ENCODE measurements at regions of chr20 and their contacts with region 1.

Region 1: GRCh38 chr20:49179368-49180277 is 8.5 kb downstream of the STAU1 start:
- DNase-seq: no peak
- ATAC-seq: peak; percentile 89
- H3K4me3 ChIP-seq: peak overlapping the region; percentile 34
- H3K27ac ChIP-seq: peak overlapping the region; percentile 74
- H3K4me1 ChIP-seq: peaks cover 16% of the 10 kb centered on the region; the same call in 1 of the 2 replicates
- H3K27me3 ChIP-seq: no peaks in the 10 kb centered on the region
- CTCF ChIP-seq: no peak
- EP300 ChIP-seq: 0 out of 4 replicates have a peak, but pooled peaks of 1 of the 2 experiments have one; percentile 12
- POLR2A ChIP-seq: no peak
- RAD21 ChIP-seq: no peak

Region 2: DNA sequence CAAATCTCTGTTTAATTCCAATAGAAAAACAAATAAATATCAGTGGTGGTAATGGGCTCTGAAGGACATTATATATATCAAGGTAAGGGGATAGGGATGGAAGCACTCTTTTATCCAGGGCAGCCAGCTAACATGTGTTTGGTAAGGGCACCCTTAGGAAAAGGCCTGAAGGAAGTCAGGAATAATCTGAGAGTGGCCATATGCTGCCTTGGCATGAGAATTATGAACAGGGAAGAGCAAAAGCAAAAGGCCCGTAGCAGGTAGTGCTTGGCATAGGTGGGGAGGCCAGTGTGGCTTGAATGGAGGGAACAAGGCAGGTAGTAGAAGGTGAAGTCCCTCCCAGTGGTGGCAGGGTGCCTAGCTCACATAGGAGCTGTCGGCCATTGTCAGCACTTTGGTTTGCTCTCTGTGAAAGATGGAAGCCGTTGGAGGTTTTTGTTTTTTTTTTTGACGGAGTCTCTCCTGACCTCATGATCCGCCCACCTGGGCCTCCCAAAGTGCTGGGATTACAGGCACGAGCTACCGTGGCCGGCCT is 173.1 kb before region 1 on chr20:
- CTCF ChIA-PET with region 1: no interaction called
- POLR2A ChIA-PET with region 1: no interaction called
- RAD21 ChIA-PET with region 1: no interaction called
- SMC1A ChIA-PET with region 1: no interaction called
- in situ Hi-C with region 1: no loop called
- intact Hi-C with region 1: no loop called
- DNase-seq: no peak
- ATAC-seq: no peak
- H3K4me3 ChIP-seq: no peak overlapping the region
- H3K27ac ChIP-seq: no peak overlapping the region
- H3K4me1 ChIP-seq: no peaks in the 10 kb centered on the region
- H3K27me3 ChIP-seq: no peaks in the 10 kb centered on the region
- CTCF ChIP-seq: no peak
- EP300 ChIP-seq: no peak
- POLR2A ChIP-seq: no peak
- RAD21 ChIP-seq: no peak

Region 3: DNA sequence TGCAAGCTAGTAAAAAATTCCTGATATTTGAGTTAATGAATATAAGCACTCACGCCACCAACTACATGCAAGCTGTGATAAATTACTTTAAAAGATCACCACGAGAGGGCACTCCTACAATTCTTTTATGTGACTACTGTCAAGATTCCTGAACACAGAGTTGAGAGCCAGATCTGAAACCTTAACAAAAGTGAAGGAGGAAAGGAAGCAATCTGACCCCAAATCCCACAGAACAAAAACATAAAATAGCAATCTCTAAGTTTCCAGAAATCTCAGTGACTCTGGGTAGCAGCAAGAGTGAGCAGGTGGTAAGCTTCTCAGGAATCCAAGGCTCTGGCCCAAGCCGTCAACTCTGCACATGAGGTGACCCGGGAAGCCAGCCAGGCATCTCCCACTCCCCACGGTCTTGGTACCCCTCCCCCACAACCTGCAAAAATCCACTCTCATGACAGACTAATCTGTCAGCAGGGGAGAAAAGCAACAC is 46.6 kb before region 1 on chr20:
- CTCF ChIA-PET with region 1: interaction called, 28 read pairs
- POLR2A ChIA-PET with region 1: interaction called, 6 read pairs
- RAD21 ChIA-PET with region 1: interaction called, 10 read pairs
- SMC1A ChIA-PET with region 1: interaction called, 35 read pairs
- in situ Hi-C with region 1: no loop called
- intact Hi-C with region 1: no loop called
- DNase-seq: peak; percentile 28
- ATAC-seq: peak; percentile 85
- H3K4me3 ChIP-seq: no peak overlapping the region
- H3K27ac ChIP-seq: no peak overlapping the region
- H3K4me1 ChIP-seq: no peaks in the 10 kb centered on the region; the same call in 1 of the 2 replicates
- H3K27me3 ChIP-seq: no peaks in the 10 kb centered on the region
- CTCF ChIP-seq: peak; percentile 31 to 63 (median 53); a peak in 5 of 6 replicates
- EP300 ChIP-seq: no peak
- POLR2A ChIP-seq: no peak
- RAD21 ChIP-seq: peak; percentile 79

Region 4: GRCh38 chr20:49148601-49149000 is 31.0 kb before region 1 on chr20:
- CTCF ChIA-PET with region 1: interaction called, 8 read pairs
- POLR2A ChIA-PET with region 1: interaction called, 7 read pairs
- RAD21 ChIA-PET with region 1: interaction called, 4 read pairs
- SMC1A ChIA-PET with region 1: interaction called, 13 read pairs
- in situ Hi-C with region 1: no loop called
- intact Hi-C with region 1: no loop called
- DNase-seq: no peak
- ATAC-seq: no peak
- H3K4me3 ChIP-seq: no peak overlapping the region
- H3K27ac ChIP-seq: no peak overlapping the region
- H3K4me1 ChIP-seq: no peaks in the 10 kb centered on the region
- H3K27me3 ChIP-seq: no peaks in the 10 kb centered on the region
- CTCF ChIP-seq: no peak
- EP300 ChIP-seq: no peak
- POLR2A ChIP-seq: no peak
- RAD21 ChIP-seq: no peak

Region 5: GRCh38 chr20:49161428-49162152 is 18.0 kb before region 1 on chr20:
- CTCF ChIA-PET with region 1: interaction called, 113 read pairs
- POLR2A ChIA-PET with region 1: interaction called, 214 read pairs
- RAD21 ChIA-PET with region 1: interaction called, 197 read pairs
- SMC1A ChIA-PET with region 1: interaction called, 271 read pairs
- in situ Hi-C with region 1: no loop called
- intact Hi-C with region 1: no loop called
- DNase-seq: no peak
- ATAC-seq: peak; percentile 59
- H3K4me3 ChIP-seq: no peak overlapping the region
- H3K27ac ChIP-seq: peak overlapping the region; percentile 5; the same call in 1 of the 2 replicates
- H3K4me1 ChIP-seq: peaks cover 26% of the 10 kb centered on the region
- H3K27me3 ChIP-seq: no peaks in the 10 kb centered on the region
- CTCF ChIP-seq: no peak
- EP300 ChIP-seq: no peak
- POLR2A ChIP-seq: no peak
- RAD21 ChIP-seq: no peak

Region 6: GRCh38 chr20:49166534-49167449 is 12.8 kb before region 1 on chr20:
- CTCF ChIA-PET with region 1: interaction called, 113 read pairs
- POLR2A ChIA-PET with region 1: interaction called, 214 read pairs
- RAD21 ChIA-PET with region 1: interaction called, 197 read pairs
- SMC1A ChIA-PET with region 1: interaction called, 271 read pairs
- in situ Hi-C with region 1: no loop called
- intact Hi-C with region 1: no loop called
- DNase-seq: no peak
- ATAC-seq: peak; percentile 90
- H3K4me3 ChIP-seq: peak overlapping the region; percentile 62
- H3K27ac ChIP-seq: peak overlapping the region; percentile 83
- H3K4me1 ChIP-seq: peaks cover 37% of the 10 kb centered on the region
- H3K27me3 ChIP-seq: no peaks in the 10 kb centered on the region
- CTCF ChIP-seq: no peak
- EP300 ChIP-seq: 0 out of 4 replicates have a peak, but pooled peaks of 1 of the 2 experiments have one; percentile 21
- POLR2A ChIP-seq: no peak
- RAD21 ChIP-seq: no peak

Region 7: DNA sequence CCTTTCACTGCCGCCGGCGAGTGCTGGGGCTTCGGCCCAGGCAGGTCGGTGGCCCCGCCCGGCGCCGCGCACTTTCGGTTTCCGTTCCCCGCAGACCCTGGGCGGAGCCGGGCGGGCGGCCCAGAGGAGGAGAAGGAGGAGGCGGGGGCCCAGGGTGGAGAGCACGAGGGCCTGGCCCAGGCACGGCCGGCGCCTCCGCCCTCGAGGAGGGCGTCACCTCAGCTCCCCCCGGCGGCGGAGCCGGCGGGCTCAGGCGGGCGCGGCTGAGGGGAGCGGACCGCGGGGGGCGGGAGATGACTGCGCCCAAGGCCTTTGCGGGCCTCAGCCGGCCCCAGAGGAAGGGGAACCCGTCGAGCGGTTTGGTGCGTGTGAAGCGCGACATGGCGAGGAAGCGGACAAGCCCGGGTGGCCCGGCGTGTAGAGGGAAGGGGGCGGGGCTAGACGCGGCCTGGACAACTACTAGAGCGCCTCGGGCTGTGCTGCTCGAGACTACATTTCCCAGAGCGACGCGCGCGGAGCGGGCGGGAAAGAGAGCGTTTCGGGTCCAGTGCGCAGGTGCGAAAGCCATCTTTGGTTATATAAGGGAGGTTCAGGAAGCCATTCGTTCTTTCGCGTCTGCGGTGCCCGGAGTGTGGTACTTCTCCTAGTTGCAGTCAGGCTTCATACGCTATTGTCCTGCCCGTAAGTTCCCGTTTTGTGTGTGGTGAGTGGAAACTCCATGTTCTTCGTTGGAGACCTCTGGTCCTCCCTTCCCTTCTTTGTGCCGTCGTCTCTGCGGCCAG is 98.6 kb after region 1 on chr20 and contains the start of gene ZNFX1:
- CTCF ChIA-PET with region 1: no interaction called
- POLR2A ChIA-PET with region 1: interaction called, 6 read pairs
- RAD21 ChIA-PET with region 1: interaction called, 3 read pairs
- SMC1A ChIA-PET with region 1: interaction called, 10 read pairs
- in situ Hi-C with region 1: no loop called
- intact Hi-C with region 1: loop called (anchors 5 kb)
- DNase-seq: peak; percentile 95
- ATAC-seq: peak; percentile 85
- H3K4me3 ChIP-seq: peak within 1 kb of the TSS; percentile 95
- H3K27ac ChIP-seq: peak within 1 kb of the TSS; percentile 92
- H3K4me1 ChIP-seq: peaks cover 3% of the 10 kb centered on the region; the same call in 1 of the 2 replicates
- H3K27me3 ChIP-seq: no peaks in the 10 kb centered on the region
- CTCF ChIP-seq: peak in 2 of 3 experiments; percentile 3 to 24; a peak in 2 of 6 replicates
- EP300 ChIP-seq: 0 out of 4 replicates have a peak, but pooled peaks of 1 of the 2 experiments have one; percentile 9
- POLR2A ChIP-seq: peak; percentile 99
- RAD21 ChIP-seq: no peak
- polyA plus RNA-seq, gene ZNFX1: 7.4 to 14.6 TPM

Measured in GM12878 (cell line).